PC-3 (cell line): ENCODE measurements at regions of chr21 and their contacts with region 1.

Region 1: DNA sequence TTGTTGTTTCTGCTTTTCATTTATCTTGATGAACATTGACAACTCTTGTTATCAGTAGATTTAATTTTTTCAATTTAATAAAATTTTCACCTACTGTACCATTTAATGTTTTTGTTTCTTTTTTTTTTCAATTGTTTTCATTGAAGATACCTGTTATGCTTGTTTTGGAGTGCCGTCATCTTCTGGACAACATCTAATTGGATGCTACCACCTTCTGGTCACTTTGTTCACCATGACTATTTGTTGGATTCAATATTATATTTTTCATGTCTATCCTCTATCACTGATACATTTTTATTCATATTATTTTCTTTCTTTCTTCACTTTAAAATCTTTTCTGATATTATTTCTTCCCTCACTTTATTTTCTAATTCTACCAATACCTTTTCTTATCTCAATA is 14.0 kb downstream of the KRTAP21-2 start:
- DNase-seq: peak; percentile 59
- ATAC-seq: peak; percentile 82
- H3K4me3 ChIP-seq: no peak overlapping the region
- H3K27ac ChIP-seq: no peak overlapping the region
- H3K4me1 ChIP-seq: no peaks in the 10 kb centered on the region
- H3K27me3 ChIP-seq: 0 out of 2 replicates have a peak, but pooled peaks cover 3% of the 10 kb centered on the region
- CTCF ChIP-seq: peak; percentile 74

Region 2: DNA sequence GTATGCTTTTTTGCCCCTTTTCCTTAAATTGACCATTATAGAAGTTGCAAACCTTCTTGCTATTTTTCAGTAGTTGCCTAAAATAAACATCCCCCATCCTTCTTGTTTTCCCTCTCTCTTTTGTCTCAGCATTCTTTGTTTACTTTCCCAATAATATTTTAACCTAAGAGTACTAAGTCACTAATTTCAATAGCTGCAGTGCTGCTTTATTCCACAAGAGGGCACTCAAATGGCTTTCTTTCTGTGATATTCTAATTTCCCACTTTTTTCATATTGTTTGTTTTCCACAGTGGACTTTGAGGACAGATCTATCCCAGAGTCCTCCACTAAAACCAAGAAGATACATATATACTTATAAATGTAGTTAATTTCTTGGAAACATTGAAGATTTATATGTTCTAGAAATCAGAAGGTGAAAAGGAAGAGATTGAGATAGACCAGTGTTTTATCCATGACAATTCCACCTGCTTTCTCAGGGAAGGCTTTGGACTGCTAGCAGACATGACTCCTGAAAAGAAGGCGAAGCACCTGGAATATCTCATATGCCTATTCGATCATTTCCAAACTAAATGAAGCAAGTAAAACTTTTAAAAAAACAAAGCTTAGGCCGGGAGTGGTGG is 688.5 kb before region 1 on chr21:
- CTCF ChIA-PET with region 1: no interaction called
- POLR2A ChIA-PET with region 1: no interaction called
- intact Hi-C with region 1: loop called (anchors 2 kb)
- DNase-seq: peak; percentile 70
- ATAC-seq: no peak
- H3K4me3 ChIP-seq: no peak overlapping the region
- H3K27ac ChIP-seq: no peak overlapping the region
- H3K4me1 ChIP-seq: no peaks in the 10 kb centered on the region
- H3K27me3 ChIP-seq: peaks cover 9% of the 10 kb centered on the region; the same call in 1 of the 2 replicates
- CTCF ChIP-seq: peak; percentile 90

Region 3: DNA sequence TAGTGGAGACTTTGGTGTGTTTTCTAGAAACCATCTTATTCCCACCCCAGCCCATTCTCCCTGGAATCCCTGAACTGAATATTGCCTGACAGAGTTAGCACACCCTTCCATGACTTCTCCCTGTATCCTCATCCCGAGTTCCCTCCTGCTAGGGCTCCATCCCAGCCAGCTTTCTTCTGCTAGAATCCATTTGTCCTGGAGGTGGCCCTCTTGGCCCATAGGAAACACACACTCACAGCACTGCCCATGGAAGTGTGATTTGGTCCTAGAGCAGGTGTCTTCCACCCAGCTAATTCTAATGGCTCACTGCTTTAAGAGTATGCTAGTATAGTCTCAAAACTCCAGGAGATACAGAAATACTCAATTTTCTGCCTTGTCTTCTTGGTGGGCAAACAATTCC is 288.8 kb before region 1 on chr21:
- CTCF ChIA-PET with region 1: no interaction called
- POLR2A ChIA-PET with region 1: no interaction called
- intact Hi-C with region 1: loop called (anchors 1 kb)
- DNase-seq: peak; percentile 19
- ATAC-seq: peak; percentile 58
- H3K4me3 ChIP-seq: no peak overlapping the region
- H3K27ac ChIP-seq: no peak overlapping the region
- H3K4me1 ChIP-seq: no peaks in the 10 kb centered on the region
- H3K27me3 ChIP-seq: peaks cover 21% of the 10 kb centered on the region; the same call in 1 of the 2 replicates
- CTCF ChIP-seq: peak; percentile 42; the same call in 1 of the 2 replicates

Region 4: DNA sequence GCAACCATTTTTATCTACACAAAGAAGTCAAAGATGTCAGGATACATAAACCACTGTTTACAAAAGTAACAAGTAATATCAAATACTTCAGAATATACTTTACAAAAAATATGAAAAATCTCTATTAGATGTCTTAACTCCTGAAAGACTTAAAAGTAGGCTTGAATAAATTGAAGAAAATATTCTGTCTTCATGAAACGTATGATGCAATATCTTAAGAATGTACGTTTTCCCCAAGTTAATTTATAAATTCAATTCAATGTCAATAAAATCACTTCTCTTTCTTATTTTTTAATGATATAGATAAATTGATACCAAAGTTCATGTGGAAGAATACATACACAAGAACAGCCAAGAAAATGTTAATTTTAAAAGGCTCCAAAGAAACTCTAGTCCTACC is 177.9 kb before region 1 on chr21:
- CTCF ChIA-PET with region 1: no interaction called
- POLR2A ChIA-PET with region 1: no interaction called
- intact Hi-C with region 1: loop called (anchors 5 kb)
- DNase-seq: no peak
- ATAC-seq: no peak
- H3K4me3 ChIP-seq: no peak overlapping the region
- H3K27ac ChIP-seq: no peak overlapping the region
- H3K4me1 ChIP-seq: no peaks in the 10 kb centered on the region
- H3K27me3 ChIP-seq: no peaks in the 10 kb centered on the region
- CTCF ChIP-seq: no peak

Region 5: GRCh38 chr21:30758306-30758705 is 25.3 kb after region 1 on chr21:
- CTCF ChIA-PET with region 1: no interaction called
- POLR2A ChIA-PET with region 1: no interaction called
- intact Hi-C with region 1: no loop called
- DNase-seq: no peak
- ATAC-seq: no peak
- H3K4me3 ChIP-seq: no peak overlapping the region
- H3K27ac ChIP-seq: no peak overlapping the region
- H3K4me1 ChIP-seq: no peaks in the 10 kb centered on the region
- H3K27me3 ChIP-seq: peaks cover 50% of the 10 kb centered on the region
- CTCF ChIP-seq: no peak

Region 6: DNA sequence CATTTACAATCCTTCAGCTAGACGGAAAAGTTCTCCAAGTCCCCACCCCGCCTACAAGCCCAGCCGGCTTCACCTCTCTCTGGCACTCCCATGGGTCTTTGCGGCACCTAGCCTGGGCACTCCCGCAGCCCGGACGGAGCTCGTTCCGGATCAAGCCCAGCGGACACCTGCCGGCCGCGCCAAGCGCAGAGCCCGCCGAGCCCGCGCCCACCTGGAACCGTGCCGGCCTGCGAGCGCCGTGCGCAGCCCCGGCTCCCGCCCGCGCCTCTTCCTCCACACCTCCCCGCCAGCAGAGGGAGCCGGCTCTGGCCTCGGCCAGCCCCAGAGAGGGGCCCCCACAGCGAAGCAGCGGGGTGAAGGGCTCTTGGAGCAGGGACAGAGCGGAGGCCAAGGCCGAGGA is 355.3 kb after region 1 on chr21:
- CTCF ChIA-PET with region 1: no interaction called
- POLR2A ChIA-PET with region 1: no interaction called
- intact Hi-C with region 1: loop called (anchors 5 kb)
- DNase-seq: no peak
- ATAC-seq: no peak
- H3K4me3 ChIP-seq: no peak overlapping the region
- H3K27ac ChIP-seq: no peak overlapping the region
- H3K4me1 ChIP-seq: no peaks in the 10 kb centered on the region
- H3K27me3 ChIP-seq: peaks cover 15% of the 10 kb centered on the region; the same call in 1 of the 2 replicates
- CTCF ChIP-seq: no peak